ENCODE measurements at regions of chr17 and their contacts with region 1.

Region 1: DNA sequence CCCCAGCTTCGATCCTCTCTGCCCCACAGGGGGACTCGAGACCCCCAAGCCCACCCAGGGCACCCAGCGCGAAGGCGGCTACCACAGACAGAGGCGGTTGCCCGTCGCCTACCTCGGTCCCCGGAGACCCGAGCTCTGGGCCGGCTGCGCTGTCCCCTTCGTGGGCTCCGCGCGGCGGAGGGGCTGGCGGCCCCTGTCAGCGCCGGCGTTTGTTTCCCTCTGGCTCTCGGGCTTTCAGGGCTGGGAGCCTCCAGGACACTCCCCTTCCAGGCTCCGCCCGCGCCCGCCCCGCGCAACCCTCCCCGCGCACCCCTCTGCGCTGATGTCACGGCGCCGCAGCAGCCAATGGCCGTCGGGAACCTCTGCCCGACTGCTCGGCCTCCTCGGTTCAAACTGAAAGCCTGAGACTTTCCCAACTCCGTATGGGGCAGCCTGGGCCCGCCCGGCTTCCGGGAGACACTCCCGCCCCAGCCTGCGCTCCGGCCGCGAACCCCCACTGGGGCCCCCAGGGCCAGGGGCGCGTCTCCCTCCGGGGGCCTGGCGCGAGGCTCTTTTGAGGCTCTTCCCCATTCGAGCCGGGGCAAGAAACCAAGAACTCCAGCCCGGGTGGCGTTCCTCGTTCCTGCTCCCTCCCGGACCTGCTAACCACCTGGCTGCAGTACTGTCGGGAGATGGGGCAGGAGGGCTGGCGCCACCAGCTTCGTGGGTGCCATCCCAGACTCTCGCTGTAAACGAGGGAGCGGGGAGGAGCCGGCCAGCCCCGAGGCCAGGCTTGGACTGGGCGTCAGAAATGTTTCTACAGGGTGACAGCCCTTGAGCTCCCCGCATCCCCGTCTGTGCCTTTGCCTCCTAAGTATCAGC is at the start of gene CDC42EP4:
- DNase-seq: peak; percentile 91
- ATAC-seq: peak; percentile 89
- H3K4me3 ChIP-seq: peak within 1 kb of the TSS; percentile 76
- H3K27ac ChIP-seq: peak within 1 kb of the TSS; percentile 99
- H3K4me1 ChIP-seq: peaks cover 15% of the 10 kb centered on the region
- H3K27me3 ChIP-seq: no peaks in the 10 kb centered on the region
- CTCF ChIP-seq: no peak
- POLR2A ChIP-seq: peak; percentile 91
- RAD21 ChIP-seq: no peak
- total RNA-seq, gene CDC42EP4: 14.3 and 16.1 TPM in 2 replicates

Region 2: GRCh38 chr17:73052923-73053322 is 259.1 kb before region 1 on chr17:
- CTCF ChIA-PET with region 1: no interaction called
- POLR2A ChIA-PET with region 1: no interaction called
- dilution Hi-C with region 1: no loop called
- in situ Hi-C with region 1: no loop called
- intact Hi-C with region 1: no loop called
- DNase-seq: no peak
- ATAC-seq: no peak
- H3K4me3 ChIP-seq: no peak overlapping the region
- H3K27ac ChIP-seq: no peak overlapping the region
- H3K4me1 ChIP-seq: peaks cover 2% of the 10 kb centered on the region; the same call in 1 of the 2 replicates
- H3K27me3 ChIP-seq: no peaks in the 10 kb centered on the region
- CTCF ChIP-seq: no peak
- POLR2A ChIP-seq: no peak
- RAD21 ChIP-seq: no peak

Region 3: DNA sequence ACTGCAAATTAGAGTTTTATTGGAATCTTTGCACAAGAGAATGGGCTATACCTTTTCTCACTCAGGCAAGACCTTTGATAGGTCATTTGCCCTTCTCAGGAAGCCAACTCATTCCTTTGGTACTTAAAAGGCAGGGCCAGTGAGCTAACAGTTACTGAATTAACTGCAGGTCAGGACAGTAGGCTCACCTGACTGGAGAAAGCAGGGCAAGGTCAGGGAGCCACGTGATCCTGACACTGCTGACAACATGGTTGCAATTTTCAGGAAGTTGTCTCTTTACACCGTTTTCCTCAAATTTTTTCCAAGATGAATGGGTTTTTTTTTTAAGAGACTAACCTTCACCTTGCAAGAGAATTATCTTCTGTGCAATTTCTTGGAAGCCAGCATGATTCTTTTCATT is 71.5 kb before region 1 on chr17:
- CTCF ChIA-PET with region 1: no interaction called
- POLR2A ChIA-PET with region 1: no interaction called
- dilution Hi-C with region 1: no loop called
- in situ Hi-C with region 1: no loop called
- intact Hi-C with region 1: no loop called
- DNase-seq: no peak
- ATAC-seq: no peak
- H3K4me3 ChIP-seq: no peak overlapping the region
- H3K27ac ChIP-seq: no peak overlapping the region
- H3K4me1 ChIP-seq: 0 out of 2 replicates have a peak, but pooled peaks cover 3% of the 10 kb centered on the region
- H3K27me3 ChIP-seq: no peaks in the 10 kb centered on the region
- CTCF ChIP-seq: no peak
- POLR2A ChIP-seq: no peak
- RAD21 ChIP-seq: no peak

Region 4: DNA sequence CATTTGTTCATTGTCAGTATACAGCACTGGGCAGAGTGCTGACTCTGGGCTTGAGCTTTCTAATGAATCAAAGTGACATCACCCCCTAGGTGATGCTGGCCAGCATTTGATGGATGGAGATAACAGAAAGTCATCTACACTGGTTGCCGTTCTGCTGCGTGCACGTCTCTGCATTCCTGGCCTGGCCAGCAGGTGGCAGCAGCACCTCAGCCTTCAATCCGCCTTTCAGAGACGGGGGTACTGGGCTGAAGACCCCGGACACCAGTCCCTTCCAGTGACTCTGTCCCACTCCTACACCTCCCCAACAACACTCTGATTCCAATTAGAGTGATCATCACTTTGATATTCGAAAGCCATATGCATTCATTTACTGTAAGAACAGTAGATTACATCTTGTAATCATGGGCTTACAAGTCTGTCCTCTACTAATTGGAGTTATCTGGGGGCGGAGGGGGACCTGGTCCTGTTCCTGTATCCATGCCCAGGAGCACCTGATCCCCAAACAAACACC is 56.3 kb before region 1 on chr17:
- CTCF ChIA-PET with region 1: no interaction called
- POLR2A ChIA-PET with region 1: no interaction called
- dilution Hi-C with region 1: no loop called
- in situ Hi-C with region 1: no loop called
- intact Hi-C with region 1: loop called (anchors 1 kb)
- DNase-seq: peak; percentile 24
- ATAC-seq: peak; percentile 87
- H3K4me3 ChIP-seq: no peak overlapping the region
- H3K27ac ChIP-seq: no peak overlapping the region
- H3K4me1 ChIP-seq: no peaks in the 10 kb centered on the region
- H3K27me3 ChIP-seq: no peaks in the 10 kb centered on the region
- CTCF ChIP-seq: peak; percentile 95
- POLR2A ChIP-seq: 0 out of 2 replicates have a peak, but pooled peaks have one; percentile 38
- RAD21 ChIP-seq: peak; percentile 99

Region 5: GRCh38 chr17:73324160-73324475 is 12.1 kb after region 1 on chr17:
- CTCF ChIA-PET with region 1: no interaction called
- POLR2A ChIA-PET with region 1: interaction called, 10 read pairs
- dilution Hi-C with region 1: no loop called
- in situ Hi-C with region 1: no loop called
- intact Hi-C with region 1: no loop called
- DNase-seq: no peak
- ATAC-seq: peak; percentile 53
- H3K4me3 ChIP-seq: no peak overlapping the region
- H3K27ac ChIP-seq: peak overlapping the region; percentile 32
- H3K4me1 ChIP-seq: peaks cover 17% of the 10 kb centered on the region
- H3K27me3 ChIP-seq: no peaks in the 10 kb centered on the region
- CTCF ChIP-seq: no peak
- POLR2A ChIP-seq: no peak
- RAD21 ChIP-seq: no peak

Region 6: DNA sequence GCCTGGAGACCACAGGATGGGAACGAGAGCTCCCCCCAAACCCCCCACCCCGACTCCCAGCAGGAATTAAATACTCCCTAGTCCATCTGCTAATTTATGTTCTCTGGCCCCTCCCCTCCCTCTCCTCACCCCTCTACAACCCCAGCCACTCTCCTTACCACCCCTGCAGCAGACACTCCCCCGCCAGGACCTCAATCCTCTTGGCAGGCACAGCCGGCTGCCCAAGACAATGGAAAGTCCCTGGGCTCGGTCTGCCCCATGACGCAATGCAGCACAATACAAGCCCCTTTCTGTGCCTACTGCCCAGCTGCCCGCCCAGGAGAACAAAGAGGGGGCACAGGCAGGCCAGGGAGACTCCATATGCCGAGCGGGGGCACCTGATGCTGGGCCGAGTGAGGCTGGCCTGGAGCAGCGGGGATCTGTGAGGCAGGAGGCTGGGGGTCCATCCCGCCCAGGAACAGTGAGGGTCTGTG is 30.1 kb after region 1 on chr17:
- CTCF ChIA-PET with region 1: no interaction called
- POLR2A ChIA-PET with region 1: no interaction called
- dilution Hi-C with region 1: no loop called
- in situ Hi-C with region 1: no loop called
- intact Hi-C with region 1: loop called (anchors 1 kb)
- DNase-seq: peak; percentile 88
- ATAC-seq: no peak
- H3K4me3 ChIP-seq: no peak overlapping the region
- H3K27ac ChIP-seq: peak overlapping the region; percentile 81
- H3K4me1 ChIP-seq: peaks cover 53% of the 10 kb centered on the region
- H3K27me3 ChIP-seq: no peaks in the 10 kb centered on the region
- CTCF ChIP-seq: no peak
- POLR2A ChIP-seq: no peak
- RAD21 ChIP-seq: no peak

Region 7: DNA sequence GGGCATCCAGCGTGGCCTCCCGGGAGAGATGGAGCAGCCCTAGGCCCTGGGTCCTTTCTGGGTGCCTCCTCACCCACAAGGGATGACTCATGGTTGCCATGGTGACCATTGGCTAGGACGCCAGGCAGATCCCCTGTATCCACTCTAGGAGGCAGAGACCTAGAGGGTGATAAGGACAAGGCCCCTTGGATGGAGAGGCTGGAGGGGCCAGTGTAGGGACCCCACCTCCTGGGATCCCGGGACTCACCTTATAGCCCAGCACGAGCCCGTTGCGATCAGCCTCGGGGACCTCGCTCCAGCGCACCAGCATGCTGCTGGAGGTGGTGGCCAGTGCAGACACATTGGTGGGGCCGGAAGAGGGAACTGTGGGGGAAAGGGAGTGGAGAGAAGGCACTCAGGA is 82.0 kb after region 1 on chr17:
- CTCF ChIA-PET with region 1: no interaction called
- POLR2A ChIA-PET with region 1: no interaction called
- dilution Hi-C with region 1: no loop called
- in situ Hi-C with region 1: no loop called
- intact Hi-C with region 1: no loop called
- DNase-seq: peak; percentile 13
- ATAC-seq: no peak
- H3K4me3 ChIP-seq: no peak overlapping the region
- H3K27ac ChIP-seq: no peak overlapping the region
- H3K4me1 ChIP-seq: no peaks in the 10 kb centered on the region
- H3K27me3 ChIP-seq: peaks cover 6% of the 10 kb centered on the region; the same call in 1 of the 2 replicates
- CTCF ChIP-seq: no peak
- POLR2A ChIP-seq: no peak
- RAD21 ChIP-seq: no peak

Measured in IMR-90 (cell line).